ENCODE measurements at regions of chr20 and their contacts with region 1.

Region 1: DNA sequence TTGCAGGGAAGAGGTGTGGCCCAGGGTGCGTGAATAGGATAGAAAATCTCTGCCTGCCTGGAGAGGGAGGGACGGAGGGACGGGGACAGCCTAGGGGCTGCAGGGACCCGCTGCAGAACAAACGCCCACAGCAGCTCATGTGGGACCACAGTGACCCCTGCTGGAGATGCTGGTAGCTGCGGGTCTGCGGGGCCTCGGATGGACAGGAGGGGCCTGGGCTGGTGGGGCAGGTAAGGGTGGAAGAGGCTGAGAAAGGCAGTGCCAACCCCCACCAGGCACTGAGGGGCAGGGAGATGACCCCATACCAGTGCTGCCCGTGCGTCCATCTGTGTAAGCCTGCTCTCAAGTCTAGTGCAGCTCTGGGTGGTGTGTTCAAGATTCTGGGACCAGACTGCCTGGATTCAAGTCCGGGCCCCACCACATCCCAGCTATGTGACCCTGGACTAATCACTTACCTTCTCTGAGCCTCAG is 39.4 kb downstream of the KIAA1755 start:
- DNase-seq: peak; percentile 66 to 90
- H3K4me3 ChIP-seq: no peak overlapping the region
- H3K27ac ChIP-seq: no peak overlapping the region
- H3K4me1 ChIP-seq: peaks cover 22% of the 10 kb centered on the region
- H3K27me3 ChIP-seq: no peaks in the 10 kb centered on the region
- CTCF ChIP-seq: peak; percentile 97

Region 2: GRCh38 chr20:37564388-37565133 is 656.6 kb before region 1 on chr20:
- CTCF ChIA-PET with region 1: interaction called, 6 read pairs
- POLR2A ChIA-PET with region 1: no interaction called
- intact Hi-C with region 1: loop called (anchors 5 kb)
- DNase-seq: peak in 1 of 2 experiments; percentile 61
- H3K4me3 ChIP-seq: no peak overlapping the region
- H3K27ac ChIP-seq: no peak overlapping the region
- H3K4me1 ChIP-seq: no peaks in the 10 kb centered on the region
- H3K27me3 ChIP-seq: peaks cover 49% of the 10 kb centered on the region
- CTCF ChIP-seq: peak; percentile 95

Region 3: GRCh38 chr20:37990571-37991151 is 230.5 kb before region 1 on chr20:
- CTCF ChIA-PET with region 1: no interaction called
- POLR2A ChIA-PET with region 1: no interaction called
- intact Hi-C with region 1: loop called (anchors 5 kb)
- DNase-seq: peak; percentile 74 to 80
- H3K4me3 ChIP-seq: no peak overlapping the region
- H3K27ac ChIP-seq: no peak overlapping the region
- H3K4me1 ChIP-seq: peaks cover 16% of the 10 kb centered on the region
- H3K27me3 ChIP-seq: no peaks in the 10 kb centered on the region
- CTCF ChIP-seq: no peak

Region 4: GRCh38 chr20:38134387-38135270 is 86.5 kb before region 1 on chr20:
- CTCF ChIA-PET with region 1: no interaction called
- POLR2A ChIA-PET with region 1: no interaction called
- intact Hi-C with region 1: loop called (anchors 1 kb)
- DNase-seq: peak; percentile 95 to 96
- H3K4me3 ChIP-seq: no peak overlapping the region
- H3K27ac ChIP-seq: peak overlapping the region; percentile 92
- H3K4me1 ChIP-seq: peaks cover 65% of the 10 kb centered on the region
- H3K27me3 ChIP-seq: no peaks in the 10 kb centered on the region
- CTCF ChIP-seq: no peak

Region 5: GRCh38 chr20:38173237-38174156 is 47.7 kb before region 1 on chr20:
- CTCF ChIA-PET with region 1: interaction called, 31 read pairs
- POLR2A ChIA-PET with region 1: no interaction called
- intact Hi-C with region 1: loop called (anchors 1 kb)
- DNase-seq: peak; percentile 81 to 91
- H3K4me3 ChIP-seq: no peak overlapping the region
- H3K27ac ChIP-seq: peak overlapping the region; percentile 78
- H3K4me1 ChIP-seq: peaks cover 53% of the 10 kb centered on the region
- H3K27me3 ChIP-seq: no peaks in the 10 kb centered on the region
- CTCF ChIP-seq: peak; percentile 41; the same call in 1 of the 2 replicates

Region 6: DNA sequence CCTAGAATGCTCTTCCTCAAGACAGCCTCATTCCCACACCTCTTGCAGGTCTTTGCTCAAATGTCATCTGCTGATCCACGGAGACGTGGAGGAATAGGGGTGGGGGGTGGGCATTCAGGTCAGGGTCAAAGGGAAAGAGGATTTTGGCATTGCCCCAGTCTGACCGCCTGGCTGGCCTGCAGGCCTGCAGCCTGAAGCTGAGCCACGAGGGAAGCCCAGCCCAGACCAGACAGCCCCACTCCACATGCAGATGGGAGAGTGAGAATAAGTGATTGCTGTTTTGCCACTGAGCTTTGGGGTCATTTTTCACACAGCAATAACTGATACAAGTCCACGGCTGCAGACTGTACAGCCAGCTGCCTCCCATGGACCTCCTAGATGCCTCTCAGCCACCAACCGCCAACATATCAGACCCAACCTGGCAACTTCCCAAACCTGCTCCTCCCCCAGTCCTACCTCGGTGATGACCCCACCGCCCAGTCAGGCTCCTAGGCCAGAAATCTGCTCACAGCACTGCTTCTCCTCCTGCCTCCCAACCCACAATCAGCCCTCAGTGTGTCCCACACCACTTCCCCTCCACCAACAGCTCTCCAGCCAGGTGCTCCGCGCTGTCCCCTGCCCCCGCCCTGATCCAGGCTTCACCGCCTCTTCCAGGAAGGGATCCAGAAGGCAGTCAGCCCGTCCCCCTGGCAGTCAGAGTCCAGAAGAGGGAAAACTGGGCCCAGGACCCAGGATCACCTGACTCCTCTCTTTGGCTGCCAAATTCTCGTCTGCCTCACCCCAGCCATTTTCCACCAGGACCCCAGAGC is 25.4 kb after region 1 on chr20:
- CTCF ChIA-PET with region 1: no interaction called
- POLR2A ChIA-PET with region 1: no interaction called
- intact Hi-C with region 1: no loop called
- DNase-seq: peak in 1 of 2 experiments; percentile 19
- H3K4me3 ChIP-seq: no peak overlapping the region
- H3K27ac ChIP-seq: no peak overlapping the region
- H3K4me1 ChIP-seq: no peaks in the 10 kb centered on the region
- H3K27me3 ChIP-seq: no peaks in the 10 kb centered on the region
- CTCF ChIP-seq: no peak

Region 7: DNA sequence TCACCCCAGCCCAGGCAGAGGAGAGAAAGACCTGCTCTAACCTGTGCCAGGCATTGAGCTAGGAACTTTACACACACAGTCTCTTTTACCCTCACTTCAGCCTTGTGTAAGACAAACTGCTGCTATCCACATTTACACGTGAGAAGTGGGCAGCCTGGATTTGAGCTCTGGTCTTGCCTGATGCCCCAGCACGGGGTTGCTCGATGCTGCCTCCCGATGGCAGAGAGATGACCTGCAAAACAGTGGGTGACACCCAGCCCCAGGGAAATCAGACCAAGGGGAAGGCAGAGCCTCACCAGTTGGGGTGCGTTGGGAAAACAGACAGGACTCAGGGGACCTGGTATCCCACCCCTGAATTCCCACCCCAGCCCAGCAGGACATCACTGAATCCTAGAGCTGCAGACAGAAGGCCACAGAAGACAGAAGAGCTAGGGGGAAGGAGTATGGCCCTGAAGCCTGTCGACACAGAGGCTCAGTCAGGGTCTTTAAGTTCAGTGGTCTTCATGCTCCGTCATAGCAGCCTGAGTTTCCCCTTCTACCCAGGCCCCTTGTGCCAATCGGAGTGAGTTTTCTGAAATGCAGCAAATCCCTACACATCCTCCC is 83.8 kb after region 1 on chr20:
- CTCF ChIA-PET with region 1: interaction called, 11 read pairs
- POLR2A ChIA-PET with region 1: no interaction called
- intact Hi-C with region 1: no loop called
- DNase-seq: peak in 1 of 2 experiments; percentile 51
- H3K4me3 ChIP-seq: no peak overlapping the region
- H3K27ac ChIP-seq: no peak overlapping the region
- H3K4me1 ChIP-seq: peaks cover 9% of the 10 kb centered on the region
- H3K27me3 ChIP-seq: peaks cover 20% of the 10 kb centered on the region; the same call in 1 of the 2 replicates
- CTCF ChIP-seq: peak; percentile 70

Region 8: DNA sequence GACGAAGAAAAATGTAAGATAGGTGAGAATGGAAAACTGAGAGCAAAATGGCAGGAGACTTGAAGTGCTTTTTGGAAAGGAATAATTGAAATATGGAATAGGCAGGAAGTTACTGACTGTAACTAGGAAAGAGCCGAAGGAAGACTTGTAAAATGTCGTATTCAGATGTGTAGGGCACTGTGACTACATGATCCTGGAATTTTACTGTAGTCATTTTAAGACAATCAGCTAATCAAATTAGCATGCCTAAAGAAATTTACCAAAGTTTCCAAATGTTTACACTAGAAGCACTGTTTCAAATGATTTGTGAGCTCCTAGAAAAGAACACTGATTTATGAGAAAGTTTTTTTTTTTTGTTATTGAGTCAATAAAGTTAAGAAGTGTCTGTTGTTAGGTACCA is 338.6 kb after region 1 on chr20:
- CTCF ChIA-PET with region 1: no interaction called
- POLR2A ChIA-PET with region 1: no interaction called
- intact Hi-C with region 1: no loop called
- DNase-seq: no peak
- H3K4me3 ChIP-seq: no peak overlapping the region
- H3K27ac ChIP-seq: no peak overlapping the region
- H3K4me1 ChIP-seq: no peaks in the 10 kb centered on the region
- H3K27me3 ChIP-seq: no peaks in the 10 kb centered on the region
- CTCF ChIP-seq: no peak

Measured in PC-9 (cell line).